CD4-positive, alpha-beta memory T cell (primary cell): ENCODE measurements at regions of chr13 and their contacts with region 1.

Region 1: GRCh38 chr13:48492470-48493065 is 40.3 kb downstream of the RCBTB2 start:
- DNase-seq: peak; percentile 77 to 85 (median 81)
- H3K4me3 ChIP-seq: peak overlapping the region; percentile 63 to 70
- H3K4me3 Mint-ChIP-seq: no peak overlapping the region
- H3K27ac ChIP-seq: peak overlapping the region; percentile 74
- H3K27ac Mint-ChIP-seq: no peak overlapping the region
- H3K4me1 ChIP-seq: peaks cover 100% of the 10 kb centered on the region
- H3K4me1 Mint-ChIP-seq: peaks cover 32 to 51% (median 46%) of the 10 kb centered on the region in 4 donors
- H3K27me3 ChIP-seq: no peaks in the 10 kb centered on the region
- H3K27me3 Mint-ChIP-seq: no peaks in the 10 kb centered on the region

Region 2: DNA sequence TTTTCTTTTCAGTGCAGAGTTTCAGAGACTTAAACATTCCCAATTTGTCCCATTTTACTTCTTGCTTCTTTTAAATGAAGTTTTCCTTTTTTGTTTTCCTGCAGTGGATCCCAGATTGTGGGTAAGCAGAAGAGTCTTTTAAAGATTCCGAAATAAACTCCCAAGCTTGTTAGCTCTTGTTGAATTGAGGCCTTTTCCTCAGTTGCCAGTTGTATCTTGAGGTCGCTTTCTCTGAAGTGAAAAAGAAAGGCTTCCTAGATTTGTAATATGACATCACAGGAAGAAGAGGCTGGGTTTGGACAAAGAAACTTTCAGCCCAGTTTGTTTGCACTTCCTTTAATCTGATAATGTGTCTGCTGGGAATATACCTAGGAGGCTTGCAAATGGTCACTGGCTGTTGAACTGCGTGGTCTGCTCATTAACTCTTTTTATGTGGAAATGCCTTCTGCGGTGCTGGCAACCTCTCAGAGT is 79.7 kb before region 1 on chr13 and contains the start of gene LPAR6:
- CTCF ChIA-PET with region 1: no interaction called
- POLR2A ChIA-PET with region 1: interaction called, 21 read pairs
- intact Hi-C with region 1: loop called (anchors 2 kb)
- DNase-seq: peak; percentile 45 to 59 (median 47)
- H3K4me3 ChIP-seq: peak within 1 kb of the TSS; percentile 67 to 90
- H3K4me3 Mint-ChIP-seq: peak within 1 kb of the TSS; percentile 89 to 100 (median 98)
- H3K27ac ChIP-seq: peak within 1 kb of the TSS; percentile 84
- H3K27ac Mint-ChIP-seq: peak within 1 kb of the TSS; percentile 94 to 99 (median 98)
- H3K4me1 ChIP-seq: peaks cover 50% of the 10 kb centered on the region
- H3K4me1 Mint-ChIP-seq: peaks cover 18 to 50% (median 36%) of the 10 kb centered on the region in 4 donors
- H3K27me3 ChIP-seq: no peaks in the 10 kb centered on the region
- H3K27me3 Mint-ChIP-seq: no peaks in the 10 kb centered on the region
- total RNA-seq, gene LPAR6: 89.0 to 91.1 TPM

Region 3: GRCh38 chr13:48526286-48526685 is 33.7 kb after region 1 on chr13:
- CTCF ChIA-PET with region 1: interaction called, 8 read pairs
- POLR2A ChIA-PET with region 1: interaction called, 12 read pairs
- intact Hi-C with region 1: no loop called
- DNase-seq: peak in 3 of 5 donors; percentile 34 to 39 (median 35)
- H3K4me3 ChIP-seq: no peak overlapping the region
- H3K4me3 Mint-ChIP-seq: peak overlapping the region in 2 of 8 donors; percentile 38 to 39
- H3K27ac ChIP-seq: no peak overlapping the region
- H3K27ac Mint-ChIP-seq: peak overlapping the region in 2 of 7 donors; percentile 57 to 63
- H3K4me1 ChIP-seq: peaks cover 39% of the 10 kb centered on the region
- H3K4me1 Mint-ChIP-seq: peaks cover 16 to 47% (median 24%) of the 10 kb centered on the region in 4 donors
- H3K27me3 ChIP-seq: no peaks in the 10 kb centered on the region
- H3K27me3 Mint-ChIP-seq: no peaks in the 10 kb centered on the region

Region 4: DNA sequence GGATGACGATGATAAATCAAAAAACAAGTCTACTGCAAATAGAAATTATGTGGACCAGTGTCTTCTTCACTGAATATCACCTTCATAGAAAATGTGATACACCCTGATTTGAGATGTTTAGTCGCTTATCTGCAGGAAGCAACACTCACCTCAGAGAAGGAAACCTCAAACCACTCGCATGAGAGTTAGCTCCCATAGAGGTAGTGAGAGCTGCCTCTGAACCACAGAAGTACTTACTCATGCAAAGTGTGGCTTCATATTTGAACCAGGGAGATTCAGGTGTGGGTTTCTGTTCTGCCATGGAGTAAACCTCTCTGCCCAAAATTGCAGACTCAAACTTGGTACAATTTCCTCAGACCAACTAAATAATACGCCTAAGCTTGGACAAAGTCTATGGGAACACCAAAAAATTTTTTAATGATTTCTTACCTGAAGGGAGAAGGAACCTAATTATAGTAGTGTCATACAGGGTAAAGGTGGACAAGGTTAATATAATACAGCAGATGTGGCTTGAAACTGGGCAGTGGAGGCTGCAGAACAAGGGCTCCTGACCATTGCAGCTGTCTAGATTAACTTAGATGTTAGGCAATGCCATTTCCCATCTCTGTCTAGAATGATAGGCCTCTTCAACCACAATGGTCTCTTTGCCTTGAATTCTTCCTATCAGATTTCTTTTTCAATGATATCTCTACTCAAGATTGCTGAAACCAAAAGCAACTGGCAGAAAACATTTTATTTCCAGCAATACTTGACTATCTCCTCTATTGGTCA is 69.9 kb after region 1 on chr13:
- CTCF ChIA-PET with region 1: no interaction called
- POLR2A ChIA-PET with region 1: interaction called, 36 read pairs
- intact Hi-C with region 1: loop called (anchors 1 kb)
- DNase-seq: peak; percentile 83 to 92 (median 87)
- H3K4me3 ChIP-seq: peak overlapping the region in 1 of 2 donors; percentile 39
- H3K4me3 Mint-ChIP-seq: peak overlapping the region in 7 of 8 donors; percentile 42 to 79 (median 76)
- H3K27ac ChIP-seq: no peak overlapping the region
- H3K27ac Mint-ChIP-seq: peak overlapping the region in 6 of 7 donors; percentile 44 to 89 (median 62)
- H3K4me1 ChIP-seq: peaks cover 56% of the 10 kb centered on the region
- H3K4me1 Mint-ChIP-seq: peaks cover 45 to 68% (median 58%) of the 10 kb centered on the region in 4 donors
- H3K27me3 ChIP-seq: no peaks in the 10 kb centered on the region
- H3K27me3 Mint-ChIP-seq: no peaks in the 10 kb centered on the region

Region 5: DNA sequence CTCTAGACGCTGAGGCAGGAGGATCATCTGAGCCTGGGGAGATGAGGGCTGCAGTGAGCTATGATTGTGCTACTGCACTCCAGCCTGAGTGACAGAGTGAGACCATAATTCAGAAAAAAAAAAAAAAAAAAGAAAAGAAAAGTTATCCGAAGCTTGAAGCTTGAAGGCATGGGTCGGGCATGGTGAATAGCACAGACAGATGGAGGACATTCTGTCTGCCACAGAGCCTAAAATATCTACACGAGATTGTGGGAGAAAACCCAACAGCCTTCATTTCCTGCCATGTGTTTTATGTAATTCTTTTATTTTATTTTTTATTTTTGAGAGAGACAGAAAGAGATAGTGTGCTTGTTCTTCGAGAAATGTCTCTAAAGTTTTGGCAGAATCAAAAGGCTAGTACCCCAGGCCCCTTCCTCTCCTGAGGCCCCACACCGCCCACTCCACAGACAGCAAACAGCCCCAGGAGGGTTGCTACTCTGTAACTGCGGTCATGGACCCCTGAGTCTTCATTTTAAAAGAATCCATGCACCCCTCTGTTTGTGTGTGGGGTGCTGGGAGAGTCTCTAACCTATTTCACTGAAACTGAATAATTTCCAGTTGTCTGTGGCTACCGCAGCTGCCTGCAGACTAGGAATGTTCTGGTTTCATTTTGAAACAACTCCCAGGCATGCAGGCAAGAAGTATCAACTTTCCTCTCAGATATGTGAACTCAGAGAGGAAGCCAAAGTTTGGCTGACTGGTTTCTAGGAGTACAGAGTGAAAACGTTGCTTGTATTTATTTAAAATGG is 78.8 kb after region 1 on chr13:
- CTCF ChIA-PET with region 1: no interaction called
- POLR2A ChIA-PET with region 1: interaction called, 10 read pairs
- intact Hi-C with region 1: no loop called
- DNase-seq: no peak
- H3K4me3 ChIP-seq: no peak overlapping the region
- H3K4me3 Mint-ChIP-seq: peak overlapping the region in 5 of 8 donors; percentile 12 to 47 (median 31)
- H3K27ac ChIP-seq: no peak overlapping the region
- H3K27ac Mint-ChIP-seq: peak overlapping the region in 3 of 7 donors; percentile 14 to 66 (median 25)
- H3K4me1 ChIP-seq: peaks cover 43% of the 10 kb centered on the region
- H3K4me1 Mint-ChIP-seq: peaks cover 17 to 54% (median 33%) of the 10 kb centered on the region in 4 donors
- H3K27me3 ChIP-seq: no peaks in the 10 kb centered on the region
- H3K27me3 Mint-ChIP-seq: peaks cover 0 to 2% of the 10 kb centered on the region in 2 donors

Region 6: DNA sequence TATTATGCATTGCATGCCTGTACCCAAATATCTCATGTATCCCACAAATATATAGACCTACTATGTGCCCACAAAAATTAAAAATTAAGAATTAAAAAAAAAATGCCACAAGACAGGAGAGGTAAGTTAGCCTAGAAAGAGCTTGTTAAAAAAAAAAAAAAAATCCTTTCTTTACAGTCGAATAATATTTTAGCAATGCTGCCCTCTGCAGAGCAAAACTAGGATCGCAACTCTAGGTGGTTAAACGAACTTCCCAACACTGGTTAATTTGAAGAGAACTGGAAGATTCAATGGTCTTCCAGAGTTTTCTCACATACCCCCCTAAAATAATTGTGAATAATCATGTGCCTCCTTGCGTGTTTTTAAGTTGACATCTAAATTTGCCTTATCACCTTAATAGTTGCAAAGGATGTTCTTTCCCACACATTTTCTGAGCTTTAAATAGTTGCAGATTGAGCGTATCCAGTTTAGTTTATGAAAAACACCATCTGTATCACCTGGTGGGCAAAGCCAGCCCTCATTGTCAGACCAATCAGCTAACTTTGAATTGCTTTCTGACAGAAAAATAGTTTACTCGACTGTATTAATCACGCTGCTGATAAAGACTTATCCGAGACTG is 87.7 kb after region 1 on chr13:
- CTCF ChIA-PET with region 1: interaction called, 10 read pairs
- POLR2A ChIA-PET with region 1: interaction called, 12 read pairs
- intact Hi-C with region 1: loop called (anchors 5 kb)
- DNase-seq: peak; percentile 64 to 74 (median 70)
- H3K4me3 ChIP-seq: no peak overlapping the region
- H3K4me3 Mint-ChIP-seq: peak overlapping the region in 1 of 8 donors; percentile 31
- H3K27ac ChIP-seq: no peak overlapping the region
- H3K27ac Mint-ChIP-seq: peak overlapping the region in 2 of 7 donors; percentile 0 to 43
- H3K4me1 ChIP-seq: peaks cover 19% of the 10 kb centered on the region
- H3K4me1 Mint-ChIP-seq: peaks cover 4 to 28% (median 13%) of the 10 kb centered on the region in 4 donors
- H3K27me3 ChIP-seq: no peaks in the 10 kb centered on the region
- H3K27me3 Mint-ChIP-seq: peaks cover 0 to 4% of the 10 kb centered on the region in 2 donors

Region 7: GRCh38 chr13:49110122-49110912 is 617.7 kb after region 1 on chr13:
- CTCF ChIA-PET with region 1: no interaction called
- POLR2A ChIA-PET with region 1: no interaction called
- intact Hi-C with region 1: loop called (anchors 2 kb)
- DNase-seq: peak; percentile 72 to 80 (median 75)
- H3K4me3 ChIP-seq: peak overlapping the region; percentile 76 to 78
- H3K4me3 Mint-ChIP-seq: peak overlapping the region; percentile 86 to 94 (median 92)
- H3K27ac ChIP-seq: peak overlapping the region; percentile 65
- H3K27ac Mint-ChIP-seq: peak overlapping the region; percentile 84 to 95 (median 92)
- H3K4me1 ChIP-seq: peaks cover 40% of the 10 kb centered on the region
- H3K4me1 Mint-ChIP-seq: peaks cover 24 to 46% (median 29%) of the 10 kb centered on the region in 4 donors
- H3K27me3 ChIP-seq: no peaks in the 10 kb centered on the region
- H3K27me3 Mint-ChIP-seq: no peaks in the 10 kb centered on the region

Region 8: DNA sequence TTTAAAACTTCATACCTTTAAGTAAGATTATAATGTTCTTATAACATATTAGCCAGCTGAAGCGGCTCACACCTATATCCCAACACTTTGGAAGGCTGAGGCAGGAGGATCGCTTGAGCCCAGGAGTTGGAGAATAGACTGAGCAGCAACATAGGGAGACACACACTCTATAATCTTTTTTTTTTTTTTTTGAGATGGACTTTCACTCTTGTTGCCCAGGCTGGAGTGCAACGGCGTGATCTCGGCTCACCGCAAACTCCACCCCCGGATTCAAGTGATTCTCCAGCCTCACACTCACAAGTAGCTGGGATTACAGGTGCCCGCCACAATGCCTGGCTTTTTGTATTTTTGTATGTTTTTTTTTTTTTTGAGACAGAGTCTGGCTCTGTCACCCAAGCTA is 1406.2 kb after region 1 on chr13:
- CTCF ChIA-PET with region 1: no interaction called
- POLR2A ChIA-PET with region 1: no interaction called
- intact Hi-C with region 1: no loop called
- DNase-seq: no peak
- H3K4me3 ChIP-seq: no peak overlapping the region
- H3K4me3 Mint-ChIP-seq: no peak overlapping the region
- H3K27ac ChIP-seq: no peak overlapping the region
- H3K27ac Mint-ChIP-seq: no peak overlapping the region
- H3K4me1 ChIP-seq: no peaks in the 10 kb centered on the region
- H3K4me1 Mint-ChIP-seq: no peaks in the 10 kb centered on the region
- H3K27me3 ChIP-seq: no peaks in the 10 kb centered on the region
- H3K27me3 Mint-ChIP-seq: peaks cover 0 to 3% of the 10 kb centered on the region in 2 donors